ENCODE measurements at regions of chr15 and their contacts with region 1.

Region 1: GRCh38 chr15:66700802-66701421 is 1.1 kb upstream of the SMAD6 start:
- DNase-seq: peak; percentile 62
- H3K4me3 ChIP-seq: peak overlapping the region; percentile 69
- CTCF ChIP-seq: no peak

Region 2: GRCh38 chr15:66374179-66374578 is 326.7 kb before region 1 on chr15:
- CTCF ChIA-PET with region 1: no interaction called
- POLR2A ChIA-PET with region 1: no interaction called
- DNase-seq: no peak
- H3K4me3 ChIP-seq: no peak overlapping the region
- CTCF ChIP-seq: no peak

Region 3: GRCh38 chr15:66555685-66556084 is 145.2 kb before region 1 on chr15:
- CTCF ChIA-PET with region 1: no interaction called
- POLR2A ChIA-PET with region 1: no interaction called
- DNase-seq: no peak
- H3K4me3 ChIP-seq: no peak overlapping the region
- CTCF ChIP-seq: no peak

Region 4: GRCh38 chr15:66603301-66604179 is 97.4 kb before region 1 on chr15:
- CTCF ChIA-PET with region 1: interaction called, 22 read pairs
- POLR2A ChIA-PET with region 1: no interaction called
- DNase-seq: no peak
- H3K4me3 ChIP-seq: no peak overlapping the region
- CTCF ChIP-seq: peak; percentile 80

Region 5: DNA sequence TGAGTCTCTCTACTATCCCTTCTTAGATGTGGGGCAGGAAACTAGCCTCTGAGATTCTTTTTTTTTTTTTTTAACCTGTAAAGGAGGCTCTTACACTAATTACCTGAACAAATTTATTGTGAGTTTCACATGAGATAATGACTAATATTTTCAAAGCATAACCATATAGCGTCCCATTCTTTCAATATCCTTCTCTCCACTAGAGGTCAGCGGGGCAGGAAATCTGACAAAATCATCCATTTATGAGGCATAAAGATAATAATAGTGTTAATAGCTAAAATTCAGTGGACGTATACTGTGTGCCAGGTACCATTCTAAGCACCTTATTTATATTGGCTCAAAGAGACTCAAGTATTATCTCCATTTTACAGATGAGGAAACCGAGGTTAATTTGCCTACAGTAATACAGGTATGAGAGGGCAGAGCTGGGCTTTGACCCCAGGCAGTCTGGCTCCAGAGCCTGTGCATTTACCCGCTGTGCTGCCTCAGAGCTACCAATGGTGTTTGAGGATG is 15.2 kb before region 1 on chr15:
- CTCF ChIA-PET with region 1: interaction called, 95 read pairs
- POLR2A ChIA-PET with region 1: no interaction called
- DNase-seq: no peak
- H3K4me3 ChIP-seq: no peak overlapping the region
- CTCF ChIP-seq: no peak

Region 6: GRCh38 chr15:66714543-66714981 is 13.7 kb after region 1 on chr15:
- CTCF ChIA-PET with region 1: interaction called, 16 read pairs
- POLR2A ChIA-PET with region 1: interaction called, 6 read pairs
- DNase-seq: no peak
- H3K4me3 ChIP-seq: no peak overlapping the region; the same call in 1 of the 2 replicates
- CTCF ChIP-seq: no peak

Measured in AG04449 (cell line).